Activated CD4-positive, alpha-beta memory T cell treated with anti-CD3 and anti-CD28 coated beads, Interleukin-2, amount 10 ng/mL, durations not matched to agents 7 days and 5 days (primary cell): ENCODE measurements at regions of chr10 and their contacts with region 1.

Region 1: DNA sequence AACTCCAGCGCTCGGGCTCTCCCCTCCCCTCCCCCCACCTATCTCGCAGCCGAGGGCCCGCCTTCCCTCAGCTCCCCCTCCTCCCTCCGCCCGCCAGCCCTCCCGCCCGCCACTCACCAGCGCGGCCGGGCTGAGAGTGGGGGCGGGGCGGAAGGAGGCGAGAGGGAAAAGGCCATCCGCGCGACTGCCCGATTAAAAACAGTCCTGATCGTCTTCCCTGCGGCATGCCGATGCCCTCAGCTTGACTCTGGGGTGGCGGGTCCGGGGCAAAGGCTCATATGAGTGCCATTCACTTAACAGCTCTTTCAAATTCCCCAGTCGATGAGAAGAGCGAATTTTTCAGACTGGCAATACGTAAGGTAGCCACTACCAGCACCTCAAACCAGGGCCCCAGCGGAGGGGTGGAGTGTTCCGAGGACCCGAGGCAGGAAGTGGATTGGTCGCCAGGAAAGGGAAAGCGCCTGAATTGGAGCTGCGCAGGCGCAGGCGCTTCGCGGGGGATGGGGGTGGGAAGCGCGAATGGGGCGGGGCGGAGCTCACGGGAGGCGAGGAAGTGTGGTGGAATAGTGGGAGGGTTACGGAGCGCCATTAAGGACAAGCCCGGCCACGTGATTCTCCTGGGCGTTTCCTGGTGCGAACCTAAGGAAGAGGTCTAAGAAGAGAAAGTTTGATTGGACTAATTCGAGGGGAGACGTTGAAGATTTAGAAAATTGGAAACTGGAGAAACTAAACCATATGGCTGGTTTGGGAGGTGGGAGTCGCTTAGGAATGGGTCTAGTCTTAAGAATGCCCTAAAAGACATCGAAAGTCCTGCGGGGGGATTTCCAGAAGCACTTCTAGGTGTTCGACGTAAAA is at the start of gene UPF2:
- DNase-seq: peak; percentile 98
- H3K4me3 Mint-ChIP-seq: peak within 1 kb of the TSS; percentile 95
- H3K27ac Mint-ChIP-seq: peak within 1 kb of the TSS; percentile 97
- H3K4me1 Mint-ChIP-seq: peaks cover 43% of the 10 kb centered on the region
- H3K27me3 Mint-ChIP-seq: no peaks in the 10 kb centered on the region
- total RNA-seq, gene UPF2: 26.7 to 28.5 TPM

Region 2: GRCh38 chr10:11921800-11922392 is 121.1 kb before region 1 on chr10:
- CTCF ChIA-PET with region 1: no interaction called
- POLR2A ChIA-PET with region 1: no interaction called
- DNase-seq: no peak
- H3K4me3 Mint-ChIP-seq: no peak overlapping the region
- H3K27ac Mint-ChIP-seq: no peak overlapping the region
- H3K4me1 Mint-ChIP-seq: no peaks in the 10 kb centered on the region
- H3K27me3 Mint-ChIP-seq: no peaks in the 10 kb centered on the region

Region 3: DNA sequence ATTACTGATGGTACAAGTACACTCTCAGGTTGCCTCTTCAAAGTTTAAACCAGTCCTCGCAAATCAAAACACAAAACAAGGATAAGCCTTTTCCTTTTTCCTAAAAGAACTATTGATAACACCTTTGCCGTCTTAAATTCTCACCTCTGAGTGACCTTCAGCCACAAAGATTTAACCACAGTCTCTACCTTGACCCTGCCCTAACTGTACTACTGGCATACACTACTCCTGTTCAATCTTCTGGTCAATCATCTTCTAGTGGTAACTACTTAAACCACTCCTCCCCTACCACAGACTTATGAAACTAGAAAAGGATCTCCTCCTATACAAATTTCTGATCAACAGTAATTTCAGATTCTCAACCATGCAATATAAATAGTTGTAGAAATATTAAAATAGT is 15.5 kb before region 1 on chr10:
- CTCF ChIA-PET with region 1: no interaction called
- POLR2A ChIA-PET with region 1: interaction called, 15 read pairs
- DNase-seq: no peak
- H3K4me3 Mint-ChIP-seq: no peak overlapping the region
- H3K27ac Mint-ChIP-seq: no peak overlapping the region
- H3K4me1 Mint-ChIP-seq: peaks cover 33% of the 10 kb centered on the region
- H3K27me3 Mint-ChIP-seq: no peaks in the 10 kb centered on the region

Region 4: DNA sequence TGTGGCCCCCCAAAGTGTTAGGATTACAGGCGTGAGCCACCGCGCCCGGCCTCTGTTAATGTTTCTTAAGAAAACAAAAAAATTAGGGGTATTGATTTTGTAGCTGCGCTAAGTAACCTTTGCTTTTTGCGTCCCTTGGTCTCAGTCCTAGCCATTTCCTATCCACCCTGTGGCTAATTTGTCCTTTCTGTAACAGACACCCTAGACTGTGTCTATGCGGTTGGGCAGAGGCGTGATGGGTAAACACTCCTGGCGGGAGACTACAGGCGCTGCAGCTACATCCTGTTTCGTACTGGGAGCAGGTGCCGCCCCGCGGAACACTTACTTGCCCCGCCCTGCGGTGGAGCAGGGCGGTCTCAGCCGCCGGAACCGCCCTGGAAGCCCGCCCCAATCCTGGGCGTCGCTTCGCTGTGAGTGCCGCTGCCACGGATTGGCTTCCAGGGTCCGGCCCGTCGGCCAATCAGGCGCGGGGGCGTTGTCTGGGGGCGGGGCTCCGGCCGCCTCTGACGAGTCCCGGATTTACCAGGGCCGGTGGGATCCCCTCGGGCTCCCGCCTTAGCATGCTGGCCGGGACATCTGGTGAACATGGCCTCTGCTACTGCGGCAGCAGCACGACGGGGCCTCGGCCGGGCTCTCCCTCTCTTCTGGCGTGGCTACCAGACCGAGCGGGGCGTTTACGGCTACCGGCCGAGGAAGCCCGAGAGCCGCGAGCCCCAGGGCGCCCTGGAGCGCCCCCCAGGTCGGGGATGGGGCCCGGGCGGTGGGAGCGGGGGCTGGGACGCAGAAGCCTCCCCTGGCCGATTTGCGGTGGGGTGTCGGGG is 25.6 kb after region 1 on chr10 and contains the start of gene DHTKD1:
- CTCF ChIA-PET with region 1: interaction called, 3 read pairs
- POLR2A ChIA-PET with region 1: interaction called, 30 read pairs
- DNase-seq: peak; percentile 99
- H3K4me3 Mint-ChIP-seq: peak within 1 kb of the TSS; percentile 82
- H3K27ac Mint-ChIP-seq: peak within 1 kb of the TSS; percentile 83
- H3K4me1 Mint-ChIP-seq: peaks cover 23% of the 10 kb centered on the region
- H3K27me3 Mint-ChIP-seq: no peaks in the 10 kb centered on the region
- total RNA-seq, gene DHTKD1: 16.9 to 17.8 TPM